Heart left ventricle (tissue), 16 donors: ENCODE measurements at regions of chr12 and their contacts with region 1.

Region 1: GRCh38 chr12:31749024-31749704 is 20.3 kb upstream of the AMN1 start:
- DNase-seq: peak in 3 of 5 donors; percentile 55 to 65 (median 59)
- ATAC-seq: peak; percentile 65 to 93 (median 90)
- H3K4me3 ChIP-seq: peak overlapping the region in 1 of 12 donors; percentile 12
- H3K27ac ChIP-seq: peak overlapping the region in 10 of 12 donors; percentile 37 to 96 (median 64)
- H3K4me1 ChIP-seq: peaks cover 0 to 81% (median 2%) of the 10 kb centered on the region in 12 donors
- H3K27me3 ChIP-seq: no peaks in the 10 kb centered on the region
- CTCF ChIP-seq: no peak
- POLR2A ChIP-seq: peak in 1 of 2 donors; percentile 20

Region 2: GRCh38 chr12:31728917-31729640 is 20.1 kb before region 1 on chr12 and contains the start of gene AMN1:
- intact Hi-C with region 1: loop called in 1 of 10 experiments (anchors 2 kb)
- DNase-seq: peak; percentile 98 to 100 (median 99)
- ATAC-seq: peak; percentile 96 to 98 (median 98)
- H3K4me3 ChIP-seq: peak within 1 kb of the TSS; percentile 46 to 85 (median 63)
- H3K27ac ChIP-seq: peak within 1 kb of the TSS; percentile 92 to 98 (median 95)
- H3K4me1 ChIP-seq: peaks cover 0 to 83% (median 41%) of the 10 kb centered on the region in 12 donors
- H3K27me3 ChIP-seq: no peaks in the 10 kb centered on the region
- CTCF ChIP-seq: peak in 3 of 12 donors; percentile 14 to 35 (median 18)
- POLR2A ChIP-seq: peak in 1 of 2 donors; percentile 84
- total RNA-seq, gene AMN1: 8.5 to 22.5 (median 16.4) TPM

Region 3: GRCh38 chr12:31813305-31813704 is 64.1 kb after region 1 on chr12:
- intact Hi-C with region 1: loop called in 1 of 10 experiments (anchors 10 kb)
- DNase-seq: no peak
- ATAC-seq: no peak
- H3K4me3 ChIP-seq: no peak overlapping the region
- H3K27ac ChIP-seq: no peak overlapping the region
- H3K4me1 ChIP-seq: peaks cover 0 to 16% (median 0%) of the 10 kb centered on the region in 12 donors
- H3K27me3 ChIP-seq: no peaks in the 10 kb centered on the region
- CTCF ChIP-seq: peak in 1 of 12 donors; percentile 12
- POLR2A ChIP-seq: no peak